ENCODE measurements at regions of chr9 and their contacts with region 1.

Region 1: GRCh38 chr9:127905004-127905728 is 5.8 kb upstream of the ST6GALNAC6 start:
- DNase-seq: no peak
- ATAC-seq: peak; percentile 31
- H3K4me3 ChIP-seq: peak overlapping the region; percentile 17; the same call in 1 of the 2 replicates
- H3K27ac ChIP-seq: peak overlapping the region; percentile 90
- H3K4me1 ChIP-seq: peaks cover 60% of the 10 kb centered on the region
- H3K27me3 ChIP-seq: no peaks in the 10 kb centered on the region
- CTCF ChIP-seq: no peak
- EP300 ChIP-seq: no peak
- POLR2A ChIP-seq: peak; percentile 63
- RAD21 ChIP-seq: no peak

Region 2: GRCh38 chr9:127779136-127779981 is 125.8 kb before region 1 on chr9:
- CTCF ChIA-PET with region 1: interaction called, 5 read pairs
- POLR2A ChIA-PET with region 1: interaction called, 11 read pairs
- RAD21 ChIA-PET with region 1: interaction called, 8 read pairs
- SMC1A ChIA-PET with region 1: interaction called, 4 read pairs
- in situ Hi-C with region 1: no loop called
- intact Hi-C with region 1: no loop called
- DNase-seq: peak; percentile 79
- ATAC-seq: peak; percentile 62
- H3K4me3 ChIP-seq: peak overlapping the region; percentile 100
- H3K27ac ChIP-seq: peak overlapping the region; percentile 93
- H3K4me1 ChIP-seq: peaks cover 44% of the 10 kb centered on the region
- H3K27me3 ChIP-seq: no peaks in the 10 kb centered on the region
- CTCF ChIP-seq: no peak
- EP300 ChIP-seq: peak in 1 of 2 experiments; percentile 23; a peak in 1 of 4 replicates
- POLR2A ChIP-seq: peak; percentile 50; the same call in 1 of the 2 replicates
- RAD21 ChIP-seq: no peak

Measured in GM12878 (cell line).